Left ventricle myocardium superior (tissue), 1 donor: ENCODE measurements at regions of chr19 and their contacts with region 1.

Region 1: DNA sequence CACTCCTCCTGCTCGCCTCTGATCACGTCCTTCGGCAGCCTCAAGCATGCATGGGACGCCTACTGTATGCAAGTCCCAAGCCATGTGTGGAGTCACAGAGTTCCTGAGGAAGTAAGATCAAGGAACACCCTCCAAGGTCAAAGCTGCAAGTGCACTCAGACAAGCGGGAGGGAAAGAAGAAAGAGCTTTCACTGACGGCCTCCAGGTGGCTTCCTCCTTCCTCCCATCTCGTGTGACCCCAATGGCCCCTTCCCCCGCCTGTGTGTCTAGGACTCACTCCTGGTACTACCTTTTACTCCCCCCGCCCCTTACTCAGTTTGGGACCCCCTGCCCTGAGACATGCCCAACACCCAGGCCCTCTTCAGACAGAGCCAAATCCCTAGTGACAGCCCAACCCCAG is 6.0 kb downstream of the HAUS8 start:
- DNase-seq: peak; percentile 12
- ATAC-seq: no peak

Region 2: DNA sequence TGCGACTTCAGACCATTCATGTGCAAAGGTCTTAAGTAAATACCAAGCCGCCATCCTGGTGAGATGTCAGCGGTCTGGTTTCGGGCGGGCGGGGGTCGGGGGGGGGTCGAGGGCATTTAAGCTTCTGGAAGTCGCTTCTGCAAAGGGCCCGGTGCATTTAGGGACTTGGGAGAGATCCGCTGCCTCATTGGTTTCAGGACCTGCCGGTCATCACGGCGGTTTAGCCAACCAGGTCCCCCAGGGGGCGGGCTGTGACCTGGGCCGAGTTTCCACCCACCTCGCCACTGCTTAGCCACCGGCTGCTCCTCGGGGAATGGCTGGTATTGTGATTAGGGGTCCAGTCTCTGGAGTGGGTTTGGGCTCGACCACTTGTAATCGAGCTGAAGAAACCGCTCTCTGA is 220.3 kb after region 1 on chr19:
- intact Hi-C with region 1: loop called (anchors 5 kb)
- DNase-seq: peak; percentile 84
- ATAC-seq: peak; percentile 49